ENCODE measurements at regions of chr12 and their contacts with region 1.

Region 1: DNA sequence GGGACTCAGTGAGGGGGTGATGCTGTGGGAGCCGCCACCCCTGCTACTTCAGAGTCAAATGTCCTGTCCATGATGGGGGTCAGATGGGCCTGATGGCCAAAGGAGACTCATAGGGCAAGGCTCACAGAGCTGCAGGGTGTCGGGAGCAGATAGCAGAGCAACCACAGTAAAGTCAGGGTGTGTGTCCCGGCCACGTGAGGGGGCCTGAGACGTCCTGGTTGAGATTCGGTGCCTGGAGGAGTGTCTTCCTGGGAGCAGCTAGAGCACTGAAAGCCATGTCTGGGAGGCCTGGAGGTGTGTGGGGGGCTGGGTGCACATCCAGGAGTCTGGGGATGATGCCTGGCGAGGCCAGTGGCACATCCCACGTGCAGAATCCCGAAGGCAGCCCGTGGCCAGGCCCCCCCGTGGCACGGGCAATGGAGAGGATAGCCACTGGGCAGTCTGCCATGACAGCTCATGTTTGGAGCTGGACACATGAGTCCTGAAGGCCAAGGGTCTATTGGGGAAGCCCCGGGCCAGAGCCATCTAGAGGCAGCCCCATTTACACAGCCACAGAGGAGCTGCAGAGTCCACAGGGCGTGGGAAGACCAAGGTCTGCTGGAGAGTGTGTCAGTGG is 308.0 kb upstream of the SFSWAP start:
- DNase-seq: no peak
- ATAC-seq: peak in 1 of 8 donors; percentile 20
- H3K4me3 ChIP-seq: no peak overlapping the region
- H3K27ac ChIP-seq: no peak overlapping the region
- H3K4me1 ChIP-seq: no peaks in the 10 kb centered on the region
- H3K27me3 ChIP-seq: peaks cover 0 to 18% (median 4%) of the 10 kb centered on the region in 7 donors
- CTCF ChIP-seq: no peak

Region 2: GRCh38 chr12:131264625-131265024 is 138.3 kb before region 1 on chr12:
- intact Hi-C with region 1: loop called in 2 of 10 experiments (anchors 2 to 5 kb)
- DNase-seq: no peak
- ATAC-seq: no peak
- H3K4me3 ChIP-seq: no peak overlapping the region
- H3K27ac ChIP-seq: no peak overlapping the region
- H3K4me1 ChIP-seq: peaks cover 0 to 4% (median 0%) of the 10 kb centered on the region in 9 donors
- H3K27me3 ChIP-seq: peaks cover 0 to 5% (median 0%) of the 10 kb centered on the region in 7 donors
- CTCF ChIP-seq: no peak

Region 3: DNA sequence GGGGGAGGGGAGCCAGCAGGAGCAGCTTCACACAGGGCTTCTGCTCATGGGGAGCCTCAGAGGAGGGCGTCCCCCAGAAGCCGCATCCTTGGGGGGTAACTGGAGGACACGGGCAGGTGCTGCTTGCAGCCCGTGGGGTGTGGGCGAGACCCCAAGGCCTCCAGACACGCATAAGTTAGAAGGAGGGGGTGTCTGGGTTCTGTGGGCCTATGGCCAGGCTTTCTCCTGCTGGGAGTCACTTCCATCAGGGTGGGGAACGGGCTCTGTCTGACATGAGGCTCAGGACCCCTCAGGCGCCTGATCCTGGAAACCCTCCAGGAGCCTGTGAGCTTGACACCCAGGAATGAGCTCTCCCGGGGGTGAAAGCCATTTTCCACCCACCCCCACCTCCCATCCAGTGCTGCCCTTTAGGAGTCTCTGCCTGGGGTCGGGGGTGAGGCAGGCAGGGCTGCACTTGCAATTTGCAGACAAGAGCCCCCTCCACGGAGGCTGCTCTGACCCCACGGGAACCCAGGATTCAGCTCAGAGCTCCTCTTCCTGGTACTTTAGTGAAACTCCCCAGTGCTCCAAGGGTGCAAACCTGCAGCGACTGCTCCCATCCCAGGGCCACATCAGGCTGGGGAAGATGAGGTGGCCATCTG is 123.5 kb before region 1 on chr12:
- intact Hi-C with region 1: loop called in 1 of 10 experiments (anchors 10 kb)
- DNase-seq: no peak
- ATAC-seq: no peak
- H3K4me3 ChIP-seq: no peak overlapping the region
- H3K27ac ChIP-seq: no peak overlapping the region
- H3K4me1 ChIP-seq: no peaks in the 10 kb centered on the region
- H3K27me3 ChIP-seq: peaks cover 0 to 22% (median 10%) of the 10 kb centered on the region in 7 donors
- CTCF ChIP-seq: no peak

Region 4: DNA sequence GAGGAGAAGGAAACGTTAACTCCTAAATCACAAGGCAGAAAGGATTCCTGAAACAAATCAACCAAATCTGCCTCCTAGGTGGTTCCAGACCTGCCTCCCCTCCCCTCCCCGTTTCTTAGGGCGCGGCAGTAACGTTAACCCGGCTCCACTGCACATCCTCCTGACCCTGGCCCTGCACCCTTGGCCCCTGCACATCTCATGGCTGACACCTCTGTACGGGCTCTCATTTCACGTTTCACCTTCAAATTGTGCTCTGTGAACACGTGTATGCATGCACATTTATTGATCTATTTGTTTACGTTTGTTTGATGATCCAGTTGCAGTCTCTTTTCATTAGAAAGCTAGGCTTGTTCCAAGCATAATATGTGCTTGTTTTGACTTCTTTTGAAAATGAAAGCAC is 91.1 kb before region 1 on chr12:
- intact Hi-C with region 1: no loop called
- DNase-seq: no peak
- ATAC-seq: no peak
- H3K4me3 ChIP-seq: no peak overlapping the region
- H3K27ac ChIP-seq: no peak overlapping the region
- H3K4me1 ChIP-seq: no peaks in the 10 kb centered on the region
- H3K27me3 ChIP-seq: peaks cover 0 to 65% (median 31%) of the 10 kb centered on the region in 7 donors
- CTCF ChIP-seq: no peak